Dorsolateral prefrontal cortex (tissue), 120 donors: ENCODE measurements at regions of chr11 and their contacts with region 1.

Region 1: DNA sequence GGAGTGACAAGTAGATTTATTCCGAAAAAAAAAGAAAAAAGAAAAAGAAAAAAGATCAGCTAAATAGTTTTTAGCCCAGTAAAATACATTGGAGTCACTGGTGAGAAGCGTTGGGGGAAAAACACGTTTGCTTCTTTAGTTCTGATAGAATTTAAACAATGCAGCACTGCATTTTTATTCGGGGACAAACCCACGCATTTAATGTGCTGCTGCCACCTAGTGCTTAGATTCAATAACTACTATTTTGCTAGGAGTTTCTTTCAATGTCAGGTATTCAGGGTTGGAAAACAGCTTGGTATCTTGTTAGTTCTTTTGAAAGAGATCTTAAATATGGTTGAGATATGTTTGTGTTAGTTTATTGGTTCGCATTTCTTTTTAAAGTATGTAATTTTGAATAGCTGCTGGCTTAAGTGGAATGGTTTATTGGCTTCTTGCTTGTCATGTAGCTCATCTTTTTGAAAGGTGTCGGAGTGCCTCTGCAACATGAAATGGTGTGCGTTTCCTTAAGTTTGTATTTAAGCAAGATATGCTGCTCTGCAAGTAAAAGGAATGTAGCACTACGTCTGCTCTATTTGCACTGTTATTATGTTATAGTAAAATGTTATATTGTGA is 41.9 kb downstream of the SVIP start:
- DNase-seq: peak in 2 of 10 donors; percentile 15 to 41
- H3K4me3 ChIP-seq: peak overlapping the region in 1 of 59 donors; percentile 4
- H3K27ac ChIP-seq: peak overlapping the region in 31 of 59 donors; percentile 3 to 77 (median 42)
- H3K27me3 ChIP-seq: no peaks in the 10 kb centered on the region
- CTCF ChIP-seq: peak; percentile 68 to 93 (median 82)

Region 2: DNA sequence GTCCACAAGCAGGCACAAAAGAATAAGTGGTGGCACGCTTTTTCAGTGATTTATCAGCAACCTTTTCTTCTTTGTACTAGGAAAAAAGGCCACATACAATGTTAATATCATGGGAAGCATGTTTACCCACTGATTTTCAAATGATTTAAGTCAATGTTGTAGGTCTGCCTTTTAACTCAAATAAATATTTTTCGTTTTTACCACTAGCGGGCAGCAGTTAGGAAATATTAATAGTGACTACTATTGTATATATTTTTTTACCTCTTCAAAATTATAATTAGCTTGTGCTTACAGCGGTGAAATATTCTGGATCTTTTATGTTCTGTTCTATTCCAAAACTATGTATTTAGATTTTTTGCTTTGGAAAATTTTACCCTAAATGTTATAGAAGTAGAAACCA is 455.9 kb before region 1 on chr11:
- intact Hi-C with region 1: loop called in 1 of 2 experiments (anchors 5 kb)
- DNase-seq: no peak
- H3K4me3 ChIP-seq: no peak overlapping the region
- H3K27ac ChIP-seq: no peak overlapping the region
- H3K27me3 ChIP-seq: peaks cover 0 to 16% (median 3%) of the 10 kb centered on the region in 45 donors
- CTCF ChIP-seq: peak in 2 of 56 donors; percentile 5 to 14

Region 3: DNA sequence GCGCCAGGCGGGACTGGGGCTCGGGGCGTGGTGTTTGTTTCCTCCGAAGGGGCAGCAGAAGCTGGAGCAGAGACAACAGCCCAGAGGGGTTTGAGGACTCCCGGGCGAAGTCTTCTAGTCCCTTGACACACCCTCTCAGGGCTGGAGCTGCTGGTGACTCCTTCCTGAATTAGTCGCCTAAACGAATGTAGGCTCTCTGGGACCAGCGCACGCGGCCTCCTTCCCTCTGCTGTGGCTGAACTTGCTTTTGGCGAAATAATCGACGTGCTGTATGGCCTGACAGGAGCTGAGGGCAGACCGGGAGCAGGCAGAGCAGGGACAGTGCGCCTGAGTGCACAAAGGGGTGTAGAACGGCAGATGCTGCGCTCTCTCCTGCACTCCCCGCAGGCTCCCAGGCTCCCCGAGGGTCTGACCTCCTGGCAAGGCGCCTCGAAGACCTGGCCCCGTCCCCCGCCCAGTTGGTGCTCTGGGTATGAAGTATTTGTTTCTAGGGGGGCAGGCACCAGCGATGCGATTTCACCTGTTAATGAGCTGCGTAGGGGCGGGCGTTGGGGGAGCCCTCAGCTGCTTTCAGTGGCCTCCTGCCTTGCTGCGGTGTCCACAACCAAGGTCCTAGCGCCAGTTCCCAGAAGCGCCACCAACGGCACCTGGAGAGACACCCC is 444.2 kb before region 1 on chr11:
- intact Hi-C with region 1: loop called in 1 of 2 experiments (anchors 10 kb)
- DNase-seq: no peak
- H3K4me3 ChIP-seq: peak overlapping the region in 1 of 59 donors; percentile 10
- H3K27ac ChIP-seq: no peak overlapping the region
- H3K27me3 ChIP-seq: peaks cover 0 to 92% (median 50%) of the 10 kb centered on the region in 45 donors
- CTCF ChIP-seq: no peak

Region 4: DNA sequence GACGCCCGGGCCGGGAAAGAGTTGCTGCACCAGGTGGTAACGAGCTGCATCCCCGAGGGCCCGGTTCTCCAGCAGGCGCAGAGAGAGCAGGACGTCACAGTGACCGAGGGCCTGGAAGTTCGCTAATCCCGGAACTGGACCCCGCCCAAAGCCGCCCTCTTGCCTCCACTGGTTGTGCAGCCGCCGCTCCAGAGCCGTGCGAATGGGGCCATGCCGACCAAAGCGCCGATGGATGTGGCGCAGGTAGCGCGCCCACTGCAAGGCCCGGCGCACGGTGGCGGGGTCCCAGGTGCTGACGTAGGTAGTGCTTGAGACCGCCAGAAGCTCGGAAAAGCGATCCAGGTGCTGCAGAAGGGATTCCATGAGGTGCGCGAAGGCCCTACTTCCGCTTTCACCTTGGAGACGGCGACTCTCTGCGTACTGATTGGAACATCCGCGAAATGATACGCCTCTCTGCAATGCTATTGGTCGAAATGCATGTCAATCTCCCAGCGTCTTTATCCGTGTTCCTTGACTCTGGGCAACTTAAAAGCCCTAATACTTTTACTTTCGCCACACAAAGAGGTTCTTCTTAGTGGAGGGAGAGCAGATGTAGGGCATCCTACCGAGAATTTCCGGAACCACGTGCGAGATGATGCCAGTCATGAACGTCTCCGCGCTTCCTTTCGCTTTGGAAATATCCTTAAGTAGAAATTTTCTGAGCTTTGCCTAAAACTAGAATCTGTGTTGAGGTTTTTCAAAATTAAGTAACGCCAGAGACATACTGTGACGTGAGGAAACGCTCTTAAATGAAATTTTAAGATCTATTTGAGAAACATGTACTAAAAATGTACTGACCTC is 162.0 kb before region 1 on chr11 and contains the start of gene FANCF:
- intact Hi-C with region 1: loop called (anchors 5 kb)
- DNase-seq: peak; percentile 66 to 96 (median 90)
- H3K4me3 ChIP-seq: peak within 1 kb of the TSS; percentile 58 to 98 (median 88)
- H3K27ac ChIP-seq: peak within 1 kb of the TSS; percentile 24 to 94 (median 83)
- H3K27me3 ChIP-seq: no peaks in the 10 kb centered on the region
- CTCF ChIP-seq: peak in 4 of 56 donors; percentile 0 to 47 (median 3)
- total RNA-seq, gene FANCF: 4.0 to 9.2 (median 6.6) TPM

Region 5: GRCh38 chr11:22666688-22667439 is 120.8 kb before region 1 on chr11:
- intact Hi-C with region 1: loop called (anchors 5 kb)
- DNase-seq: peak in 9 of 10 donors; percentile 5 to 79 (median 66)
- H3K4me3 ChIP-seq: peak overlapping the region; percentile 41 to 81 (median 65)
- H3K27ac ChIP-seq: peak overlapping the region in 34 of 59 donors; percentile 6 to 71 (median 51)
- H3K27me3 ChIP-seq: no peaks in the 10 kb centered on the region
- CTCF ChIP-seq: peak in 5 of 56 donors; percentile 7 to 17 (median 9)

Region 6: DNA sequence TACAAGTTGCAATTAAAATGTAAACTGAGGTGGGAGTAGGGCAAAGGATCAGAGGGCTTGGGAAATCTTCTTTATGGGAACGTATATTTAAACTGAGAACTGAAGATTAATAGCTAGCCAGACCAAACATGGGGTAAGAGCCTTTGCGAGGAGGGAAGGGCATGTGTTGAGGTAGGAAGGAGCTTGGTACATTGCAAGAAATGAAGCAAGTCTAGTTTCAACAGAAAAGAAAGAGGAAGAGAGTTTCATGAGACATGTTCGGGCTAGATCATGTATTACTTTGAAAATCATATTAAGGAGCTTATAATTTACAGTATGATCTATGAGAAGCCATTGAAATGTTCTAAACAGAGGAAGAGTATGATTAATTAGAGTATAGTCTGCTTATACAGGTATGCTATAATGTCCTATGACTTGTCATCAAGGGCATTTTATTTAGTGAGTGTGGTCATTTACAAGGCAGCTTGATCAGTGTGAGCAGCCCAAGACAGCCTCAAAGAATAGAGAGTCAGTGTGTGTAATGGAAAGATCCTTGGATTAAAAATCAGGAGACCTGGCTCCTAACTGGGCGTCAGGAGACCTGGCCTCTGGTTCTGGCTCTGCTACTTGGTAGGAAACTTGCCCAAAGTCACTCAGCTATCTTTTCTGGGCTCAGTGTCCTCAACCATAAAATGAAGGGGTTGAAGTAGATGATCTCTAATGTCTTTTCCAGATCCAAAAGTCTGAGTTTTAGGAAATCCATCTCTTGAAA is 110.3 kb before region 1 on chr11:
- intact Hi-C with region 1: no loop called
- DNase-seq: no peak
- H3K4me3 ChIP-seq: no peak overlapping the region
- H3K27ac ChIP-seq: no peak overlapping the region
- H3K27me3 ChIP-seq: no peaks in the 10 kb centered on the region
- CTCF ChIP-seq: no peak

Region 7: DNA sequence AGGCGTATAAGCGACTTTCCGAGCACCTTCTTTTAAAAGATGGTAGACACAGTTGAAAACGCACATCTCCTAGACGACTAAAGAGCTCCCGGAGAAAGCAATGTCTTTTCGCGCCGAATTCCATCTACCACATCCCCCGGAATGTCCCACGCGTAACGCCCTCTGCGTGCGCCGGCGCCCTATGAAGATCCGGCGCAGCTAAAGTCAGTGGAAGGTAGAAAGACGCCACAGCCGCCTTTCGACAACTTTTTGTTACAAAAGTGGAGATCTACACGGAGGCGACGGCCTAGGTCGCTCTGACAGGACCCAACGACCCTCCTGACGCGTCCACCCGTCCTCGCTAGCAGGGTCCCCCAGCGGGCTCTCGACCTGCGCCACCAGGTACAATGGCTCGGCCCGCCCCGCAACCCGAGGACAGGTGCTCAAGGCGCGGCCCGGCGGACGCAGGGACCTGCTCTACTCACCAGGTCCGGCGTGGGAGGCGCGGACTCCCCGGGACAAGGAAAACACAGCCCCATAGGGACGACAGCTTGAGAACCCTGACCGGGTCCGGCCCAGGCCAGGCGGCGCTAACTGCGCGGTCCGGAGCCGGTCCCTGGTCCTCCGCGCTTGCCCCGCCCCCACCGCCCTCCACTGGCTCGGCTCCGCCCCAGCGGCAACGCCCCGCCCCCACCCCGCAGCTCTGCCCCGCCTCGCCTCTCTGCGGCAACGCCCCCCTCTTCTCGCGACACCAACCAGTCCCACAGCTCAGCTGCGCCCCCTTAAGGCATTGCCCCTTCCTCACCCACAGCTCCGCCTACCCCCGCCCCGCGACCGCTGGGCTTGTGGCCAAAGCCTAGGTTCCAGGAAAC is 41.8 kb after region 1 on chr11 and contains the start of gene SVIP:
- intact Hi-C with region 1: loop called in 1 of 2 experiments (anchors 5 kb)
- DNase-seq: peak; percentile 88 to 98 (median 93)
- H3K4me3 ChIP-seq: peak within 1 kb of the TSS; percentile 64 to 100 (median 93)
- H3K27ac ChIP-seq: peak within 1 kb of the TSS; percentile 56 to 96 (median 88)
- H3K27me3 ChIP-seq: no peaks in the 10 kb centered on the region
- CTCF ChIP-seq: peak; percentile 54 to 89 (median 78)
- total RNA-seq, gene SVIP: 24.9 to 78.0 (median 51.0) TPM

Region 8: DNA sequence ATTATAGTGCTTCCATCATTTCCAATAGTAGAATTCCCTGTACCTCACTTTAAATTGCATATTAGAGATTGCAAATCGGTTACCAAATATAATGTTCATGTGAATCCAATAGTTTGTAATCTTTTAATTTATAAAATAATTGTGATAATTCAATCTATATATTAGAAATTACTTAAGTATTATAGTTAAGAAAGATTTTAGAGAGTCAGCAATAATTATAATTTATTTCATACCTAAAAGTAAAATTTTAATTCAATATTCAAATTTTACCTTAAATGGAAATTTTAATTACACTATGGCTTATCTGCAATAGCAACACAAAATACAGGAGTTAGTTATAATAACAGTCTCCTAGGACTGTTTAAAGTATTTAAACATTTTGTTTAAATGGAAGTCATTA is 59.1 kb after region 1 on chr11:
- intact Hi-C with region 1: no loop called
- DNase-seq: no peak
- H3K4me3 ChIP-seq: no peak overlapping the region
- H3K27ac ChIP-seq: no peak overlapping the region
- H3K27me3 ChIP-seq: no peaks in the 10 kb centered on the region
- CTCF ChIP-seq: no peak